Panc1 (cell line): ENCODE measurements at regions of chr11 and their contacts with region 1.

Region 1: DNA sequence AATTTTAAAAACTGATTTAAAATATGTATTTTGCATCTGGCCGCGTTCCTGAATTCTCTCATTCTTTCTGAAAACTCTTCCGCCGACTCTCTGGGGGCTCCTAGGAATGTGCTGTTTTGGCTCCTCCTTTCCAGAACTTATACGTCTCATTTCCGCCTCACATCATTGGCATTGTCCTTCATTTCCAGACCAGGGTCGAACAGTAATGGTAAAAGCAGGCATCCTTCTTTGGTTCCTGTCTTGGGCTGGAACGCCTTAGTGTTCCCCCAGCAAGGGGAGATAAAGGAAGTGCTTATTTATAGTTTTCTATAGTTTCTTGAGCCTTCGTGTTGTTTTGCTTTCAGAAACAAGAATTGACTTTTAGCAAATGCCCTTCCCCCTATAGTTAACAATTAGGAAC is 10.9 kb upstream of the TNNT3 start:
- DNase-seq: no peak
- ATAC-seq: no peak
- H3K4me3 ChIP-seq: no peak overlapping the region
- H3K27ac ChIP-seq: no peak overlapping the region
- H3K4me1 ChIP-seq: no peaks in the 10 kb centered on the region
- H3K27me3 ChIP-seq: no peaks in the 10 kb centered on the region; the same call in 1 of the 2 replicates
- CTCF ChIP-seq: no peak

Region 2: GRCh38 chr11:1796413-1797011 is 112.1 kb before region 1 on chr11:
- CTCF ChIA-PET with region 1: no interaction called
- POLR2A ChIA-PET with region 1: no interaction called
- in situ Hi-C with region 1: no loop called
- intact Hi-C with region 1: no loop called
- DNase-seq: no peak
- ATAC-seq: peak; percentile 22; the same call in 1 of the 2 replicates
- H3K4me3 ChIP-seq: no peak overlapping the region
- H3K27ac ChIP-seq: 0 out of 2 replicates have a peak overlapping the region, but pooled peaks have one; percentile 2
- H3K4me1 ChIP-seq: peaks cover 5% of the 10 kb centered on the region
- H3K27me3 ChIP-seq: no peaks in the 10 kb centered on the region
- CTCF ChIP-seq: no peak

Region 3: DNA sequence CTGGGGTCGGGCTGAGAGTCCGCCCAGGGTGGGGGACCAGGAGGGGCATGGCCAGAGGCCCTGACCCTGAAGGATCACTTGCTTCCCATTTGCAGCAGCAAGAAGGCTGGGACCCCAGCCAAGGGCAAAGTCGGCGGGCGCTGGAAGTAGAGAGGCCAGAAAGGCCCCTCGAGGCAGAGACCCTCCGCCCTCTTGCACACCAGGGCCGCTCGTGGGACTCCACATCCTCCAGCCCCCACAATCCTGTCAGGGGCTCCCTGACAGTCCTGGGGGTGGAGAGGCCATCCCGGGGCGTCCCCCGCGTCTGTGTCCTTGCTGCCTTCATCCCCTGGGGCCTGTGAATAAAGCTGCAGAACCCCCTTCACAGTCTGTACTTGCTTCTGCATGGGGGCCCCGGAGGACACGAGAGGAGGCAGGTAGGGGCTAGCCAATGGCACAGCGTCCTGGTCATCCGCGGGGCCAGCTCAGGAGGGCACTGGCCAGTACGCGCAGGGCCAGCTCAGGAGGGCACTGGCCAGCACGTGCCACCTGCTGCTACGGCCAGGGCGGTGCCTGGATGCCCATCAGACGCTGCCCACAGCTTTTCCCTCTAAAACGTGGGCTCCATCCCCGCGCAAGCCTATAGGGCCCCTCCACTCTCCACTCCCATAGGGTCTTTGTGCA is 29.9 kb after region 1 on chr11:
- CTCF ChIA-PET with region 1: no interaction called
- POLR2A ChIA-PET with region 1: interaction called, 12 read pairs
- in situ Hi-C with region 1: no loop called
- intact Hi-C with region 1: loop called (anchors 1 kb)
- DNase-seq: no peak
- ATAC-seq: peak; percentile 10; the same call in 1 of the 2 replicates
- H3K4me3 ChIP-seq: no peak overlapping the region
- H3K27ac ChIP-seq: no peak overlapping the region
- H3K4me1 ChIP-seq: peaks cover 6% of the 10 kb centered on the region
- H3K27me3 ChIP-seq: no peaks in the 10 kb centered on the region
- CTCF ChIP-seq: no peak

Region 4: GRCh38 chr11:1943977-1944376 is 35.4 kb after region 1 on chr11:
- CTCF ChIA-PET with region 1: interaction called, 3 read pairs
- POLR2A ChIA-PET with region 1: interaction called, 12 read pairs
- in situ Hi-C with region 1: no loop called
- intact Hi-C with region 1: no loop called
- DNase-seq: no peak
- ATAC-seq: peak; percentile 31
- H3K4me3 ChIP-seq: peak overlapping the region; percentile 5 to 28; a peak in 2 of 4 replicates
- H3K27ac ChIP-seq: peak overlapping the region; percentile 54; the same call in 1 of the 2 replicates
- H3K4me1 ChIP-seq: peaks cover 15% of the 10 kb centered on the region
- H3K27me3 ChIP-seq: no peaks in the 10 kb centered on the region
- CTCF ChIP-seq: no peak

Region 5: GRCh38 chr11:2077061-2077802 is 168.6 kb after region 1 on chr11:
- CTCF ChIA-PET with region 1: no interaction called
- POLR2A ChIA-PET with region 1: no interaction called
- in situ Hi-C with region 1: no loop called
- intact Hi-C with region 1: no loop called
- DNase-seq: peak; percentile 97
- ATAC-seq: peak; percentile 96
- H3K4me3 ChIP-seq: no peak overlapping the region
- H3K27ac ChIP-seq: no peak overlapping the region
- H3K4me1 ChIP-seq: peaks cover 5% of the 10 kb centered on the region; the same call in 1 of the 2 replicates
- H3K27me3 ChIP-seq: no peaks in the 10 kb centered on the region
- CTCF ChIP-seq: no peak

Region 6: DNA sequence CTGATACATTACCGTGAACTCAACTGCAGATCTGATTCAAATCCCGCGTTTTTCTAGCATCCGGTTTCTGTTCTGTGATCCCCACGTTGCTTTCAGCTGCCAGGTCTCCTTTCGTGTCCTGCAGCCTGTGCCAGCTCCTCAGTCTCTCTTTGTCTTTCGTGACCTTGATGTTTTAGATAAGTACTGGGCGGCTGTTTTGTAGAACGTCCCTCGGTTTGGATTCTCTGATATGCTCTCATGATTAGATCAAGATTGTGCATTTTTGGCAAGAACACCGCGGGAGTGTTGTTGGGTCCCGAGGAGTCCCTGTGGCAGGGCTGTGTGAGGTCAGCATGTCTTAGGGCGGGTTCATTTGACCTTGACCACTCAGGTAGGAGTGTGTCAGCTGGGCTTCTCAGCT is 574.8 kb after region 1 on chr11:
- CTCF ChIA-PET with region 1: no interaction called
- POLR2A ChIA-PET with region 1: no interaction called
- in situ Hi-C with region 1: no loop called
- intact Hi-C with region 1: no loop called
- DNase-seq: no peak
- ATAC-seq: no peak
- H3K4me3 ChIP-seq: no peak overlapping the region
- H3K27ac ChIP-seq: no peak overlapping the region
- H3K4me1 ChIP-seq: no peaks in the 10 kb centered on the region
- H3K27me3 ChIP-seq: peaks cover 28% of the 10 kb centered on the region
- CTCF ChIP-seq: no peak